ENCODE measurements at regions of chr5 and their contacts with region 1.

Region 1: DNA sequence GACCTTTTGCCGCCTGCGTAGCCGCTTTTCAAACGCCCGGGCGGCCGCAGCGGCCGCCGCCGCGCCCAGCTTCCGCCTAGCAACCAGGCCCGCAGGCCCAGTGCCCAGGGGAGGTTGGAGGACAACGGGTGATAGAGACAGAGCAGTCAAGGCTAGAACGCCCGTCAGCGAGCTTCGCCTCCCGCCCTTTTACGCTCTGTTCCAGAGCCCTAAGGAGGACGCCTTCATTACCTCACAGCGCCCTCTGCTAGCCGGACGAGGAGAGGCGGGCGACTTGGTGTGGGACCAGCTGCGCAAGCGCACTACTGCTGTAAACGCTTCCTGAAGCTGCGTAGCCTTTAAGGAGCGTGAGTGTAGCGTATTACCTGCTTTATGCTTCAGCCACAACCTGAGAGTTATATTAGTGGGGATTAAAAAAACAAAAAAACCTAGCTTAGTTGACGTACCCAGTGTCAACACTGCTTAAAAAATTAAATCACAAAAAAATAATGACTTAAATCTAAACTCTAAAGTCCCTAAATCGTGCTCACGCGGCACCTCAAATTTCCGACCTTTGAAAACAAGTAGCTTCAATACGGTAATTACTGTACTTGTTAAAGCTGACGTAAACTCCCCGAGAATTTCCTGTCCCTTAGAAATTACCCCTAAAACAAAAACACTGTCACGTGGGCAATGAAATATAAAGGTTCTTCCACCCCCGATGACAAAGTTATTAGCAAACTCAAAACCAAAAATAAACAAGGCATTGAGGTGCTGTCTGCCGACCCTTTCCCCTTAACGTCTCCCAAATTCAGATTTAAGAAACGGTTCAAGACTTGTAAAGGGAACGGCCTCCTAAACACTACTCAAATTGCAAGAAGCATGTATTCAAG is at the start of gene CEP120:
- DNase-seq: peak; percentile 93 to 100 (median 96)
- ATAC-seq: peak; percentile 91
- H3K4me3 ChIP-seq: peak within 1 kb of the TSS; percentile 70
- H3K4me3 Mint-ChIP-seq: no peak within 1 kb of the TSS
- H3K27ac ChIP-seq: peak within 1 kb of the TSS; percentile 90
- H3K27ac Mint-ChIP-seq: no peak within 1 kb of the TSS
- H3K4me1 ChIP-seq: peaks cover 9% of the 10 kb centered on the region
- H3K4me1 Mint-ChIP-seq: peaks cover 19% of the 10 kb centered on the region
- H3K27me3 ChIP-seq: no peaks in the 10 kb centered on the region
- H3K27me3 Mint-ChIP-seq: no peaks in the 10 kb centered on the region
- CTCF ChIP-seq: peak; percentile 81
- total RNA-seq, gene CEP120: 69.9 to 74.9 TPM

Region 2: GRCh38 chr5:122774861-122775549 is 648.5 kb before region 1 on chr5 and contains the start of gene SNX2:
- CTCF ChIA-PET with region 1: interaction called, 5 read pairs
- POLR2A ChIA-PET with region 1: interaction called, 38 read pairs
- intact Hi-C with region 1: loop called in 1 of 2 experiments (anchors 5 kb)
- DNase-seq: peak; percentile 73 to 94 (median 84)
- ATAC-seq: peak; percentile 84
- H3K4me3 ChIP-seq: peak within 1 kb of the TSS; percentile 93
- H3K4me3 Mint-ChIP-seq: peak within 1 kb of the TSS; percentile 96
- H3K27ac ChIP-seq: peak within 1 kb of the TSS; percentile 78 to 84
- H3K27ac Mint-ChIP-seq: peak within 1 kb of the TSS; percentile 95
- H3K4me1 ChIP-seq: peaks cover 7% of the 10 kb centered on the region
- H3K4me1 Mint-ChIP-seq: peaks cover 61% of the 10 kb centered on the region
- H3K27me3 ChIP-seq: no peaks in the 10 kb centered on the region
- H3K27me3 Mint-ChIP-seq: no peaks in the 10 kb centered on the region
- CTCF ChIP-seq: peak; percentile 14
- total RNA-seq, gene SNX2: 46.0 to 46.5 TPM

Region 3: DNA sequence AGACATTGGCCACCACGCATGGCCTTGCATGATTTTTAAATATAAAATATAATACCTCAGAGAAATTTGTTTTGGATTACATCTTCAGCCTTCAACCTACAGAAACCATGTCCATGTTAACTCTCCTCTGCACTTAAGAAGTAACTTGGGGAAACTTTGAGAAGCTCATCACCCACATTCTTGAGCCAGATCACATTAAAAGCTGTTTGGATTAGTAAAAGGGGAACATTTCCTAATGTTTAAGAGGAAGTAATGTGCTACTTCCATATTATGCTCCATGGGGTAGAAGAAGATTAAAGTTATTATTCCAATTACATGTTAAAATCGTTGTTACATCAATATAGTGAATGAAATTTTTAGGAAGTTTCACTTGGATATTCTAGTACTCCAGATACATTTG is 10.1 kb after region 1 on chr5:
- CTCF ChIA-PET with region 1: interaction called, 4 read pairs
- POLR2A ChIA-PET with region 1: interaction called, 19 read pairs
- intact Hi-C with region 1: no loop called
- DNase-seq: no peak
- ATAC-seq: no peak
- H3K4me3 ChIP-seq: no peak overlapping the region
- H3K4me3 Mint-ChIP-seq: no peak overlapping the region
- H3K27ac ChIP-seq: no peak overlapping the region
- H3K27ac Mint-ChIP-seq: no peak overlapping the region
- H3K4me1 ChIP-seq: no peaks in the 10 kb centered on the region
- H3K4me1 Mint-ChIP-seq: no peaks in the 10 kb centered on the region
- H3K27me3 ChIP-seq: no peaks in the 10 kb centered on the region
- H3K27me3 Mint-ChIP-seq: peaks cover 11% of the 10 kb centered on the region
- CTCF ChIP-seq: no peak

Region 4: DNA sequence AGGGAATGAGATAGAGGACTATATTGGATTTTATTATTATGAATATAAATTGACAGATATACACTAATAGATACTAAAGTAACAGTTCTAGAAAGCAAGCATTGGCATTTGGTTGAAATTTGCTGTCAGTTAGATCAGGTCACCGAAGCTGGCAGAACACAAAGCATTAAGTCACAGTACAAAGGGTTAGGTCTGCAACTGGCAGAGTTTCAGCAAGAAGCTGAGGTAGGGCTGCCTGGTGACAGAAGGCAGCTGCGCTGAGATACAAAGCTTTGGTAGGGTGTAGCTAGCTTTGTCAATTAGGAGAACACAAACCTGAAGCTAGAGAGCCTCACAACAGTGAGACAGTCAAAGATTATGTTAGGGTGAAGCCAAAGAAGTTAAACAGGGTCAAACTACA is 82.1 kb after region 1 on chr5:
- CTCF ChIA-PET with region 1: interaction called, 29 read pairs
- POLR2A ChIA-PET with region 1: interaction called, 181 read pairs
- intact Hi-C with region 1: loop called in 1 of 2 experiments (anchors 2 kb)
- DNase-seq: no peak
- ATAC-seq: no peak
- H3K4me3 ChIP-seq: no peak overlapping the region
- H3K4me3 Mint-ChIP-seq: no peak overlapping the region
- H3K27ac ChIP-seq: no peak overlapping the region
- H3K27ac Mint-ChIP-seq: no peak overlapping the region
- H3K4me1 ChIP-seq: no peaks in the 10 kb centered on the region
- H3K4me1 Mint-ChIP-seq: peaks cover 5% of the 10 kb centered on the region
- H3K27me3 ChIP-seq: no peaks in the 10 kb centered on the region
- H3K27me3 Mint-ChIP-seq: peaks cover 7% of the 10 kb centered on the region
- CTCF ChIP-seq: no peak

Region 5: GRCh38 chr5:123538670-123539459 is 115.4 kb after region 1 on chr5:
- CTCF ChIA-PET with region 1: interaction called, 6 read pairs
- POLR2A ChIA-PET with region 1: interaction called, 20 read pairs
- intact Hi-C with region 1: no loop called
- DNase-seq: no peak
- ATAC-seq: no peak
- H3K4me3 ChIP-seq: no peak overlapping the region
- H3K4me3 Mint-ChIP-seq: no peak overlapping the region
- H3K27ac ChIP-seq: no peak overlapping the region
- H3K27ac Mint-ChIP-seq: no peak overlapping the region
- H3K4me1 ChIP-seq: peaks cover 6% of the 10 kb centered on the region
- H3K4me1 Mint-ChIP-seq: peaks cover 80% of the 10 kb centered on the region
- H3K27me3 ChIP-seq: no peaks in the 10 kb centered on the region
- H3K27me3 Mint-ChIP-seq: no peaks in the 10 kb centered on the region
- CTCF ChIP-seq: no peak

Region 6: GRCh38 chr5:123610665-123611405 is 187.3 kb after region 1 on chr5:
- CTCF ChIA-PET with region 1: interaction called, 28 read pairs
- POLR2A ChIA-PET with region 1: interaction called, 23 read pairs
- intact Hi-C with region 1: loop called (anchors 2 to 5 kb)
- DNase-seq: peak in 5 of 14 experiments; percentile 3 to 78 (median 63)
- ATAC-seq: peak; percentile 82
- H3K4me3 ChIP-seq: no peak overlapping the region
- H3K4me3 Mint-ChIP-seq: no peak overlapping the region
- H3K27ac ChIP-seq: no peak overlapping the region
- H3K27ac Mint-ChIP-seq: peak overlapping the region; percentile 25
- H3K4me1 ChIP-seq: no peaks in the 10 kb centered on the region
- H3K4me1 Mint-ChIP-seq: no peaks in the 10 kb centered on the region
- H3K27me3 ChIP-seq: no peaks in the 10 kb centered on the region
- H3K27me3 Mint-ChIP-seq: no peaks in the 10 kb centered on the region
- CTCF ChIP-seq: peak; percentile 96